ENCODE measurements at regions of chr12 and their contacts with region 1.

Region 1: GRCh38 chr12:57793920-57794319 is 11.3 kb downstream of the TSFM start:
- DNase-seq: peak; percentile 74
- H3K4me3 Mint-ChIP-seq: no peak overlapping the region
- H3K27ac Mint-ChIP-seq: no peak overlapping the region
- H3K4me1 Mint-ChIP-seq: peaks cover 9% of the 10 kb centered on the region
- H3K27me3 Mint-ChIP-seq: no peaks in the 10 kb centered on the region
- CTCF ChIP-seq: no peak

Region 2: DNA sequence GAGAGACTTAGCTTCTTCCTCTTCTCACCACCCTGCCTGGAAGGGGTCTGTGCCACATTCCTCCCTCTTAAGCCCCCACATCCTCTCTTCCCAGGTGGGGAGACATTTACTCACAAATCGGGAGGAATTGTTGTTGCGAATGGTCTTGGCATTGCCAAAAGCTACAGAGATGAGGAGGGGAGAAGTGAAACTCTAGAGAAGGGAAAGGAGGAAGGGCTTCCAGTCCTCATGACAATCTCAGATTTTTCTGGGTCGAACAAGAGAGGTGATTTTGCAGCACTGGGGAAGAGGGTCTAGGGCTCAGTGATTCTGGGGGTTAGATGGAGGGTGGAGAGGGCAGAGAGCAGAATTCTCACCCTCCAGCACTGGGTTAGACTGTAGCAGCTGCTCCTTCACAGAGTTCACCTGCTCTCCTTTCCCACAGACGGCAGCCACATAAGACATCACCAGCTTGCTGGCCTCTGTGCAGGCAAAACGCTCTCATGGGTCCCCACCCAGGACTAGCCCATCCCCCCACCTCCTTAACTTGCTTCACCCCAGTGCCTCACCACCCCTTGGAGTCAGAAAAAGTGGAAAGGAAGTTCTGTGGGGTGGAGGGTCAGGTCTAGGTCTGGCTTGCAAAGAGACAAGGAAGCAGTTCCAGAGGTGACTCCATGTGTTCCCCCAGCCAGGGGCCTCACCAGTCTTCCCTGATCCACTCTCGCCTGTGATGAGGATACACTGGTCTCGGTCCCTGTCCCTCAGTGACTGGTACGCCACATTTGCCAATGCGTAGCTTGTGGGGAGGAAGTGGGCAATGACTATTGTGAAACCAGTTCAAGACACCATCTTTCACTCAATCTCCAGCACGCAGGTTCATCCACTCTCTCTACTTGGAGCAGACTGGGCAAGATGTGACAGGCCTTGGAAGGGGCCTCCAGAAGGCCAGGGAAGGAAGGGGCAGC is 746.7 kb before region 1 on chr12:
- CTCF ChIA-PET with region 1: no interaction called
- POLR2A ChIA-PET with region 1: no interaction called
- intact Hi-C with region 1: no loop called
- DNase-seq: no peak
- H3K4me3 Mint-ChIP-seq: no peak overlapping the region
- H3K27ac Mint-ChIP-seq: no peak overlapping the region
- H3K4me1 Mint-ChIP-seq: no peaks in the 10 kb centered on the region
- H3K27me3 Mint-ChIP-seq: peaks cover 28% of the 10 kb centered on the region
- CTCF ChIP-seq: no peak

Region 3: DNA sequence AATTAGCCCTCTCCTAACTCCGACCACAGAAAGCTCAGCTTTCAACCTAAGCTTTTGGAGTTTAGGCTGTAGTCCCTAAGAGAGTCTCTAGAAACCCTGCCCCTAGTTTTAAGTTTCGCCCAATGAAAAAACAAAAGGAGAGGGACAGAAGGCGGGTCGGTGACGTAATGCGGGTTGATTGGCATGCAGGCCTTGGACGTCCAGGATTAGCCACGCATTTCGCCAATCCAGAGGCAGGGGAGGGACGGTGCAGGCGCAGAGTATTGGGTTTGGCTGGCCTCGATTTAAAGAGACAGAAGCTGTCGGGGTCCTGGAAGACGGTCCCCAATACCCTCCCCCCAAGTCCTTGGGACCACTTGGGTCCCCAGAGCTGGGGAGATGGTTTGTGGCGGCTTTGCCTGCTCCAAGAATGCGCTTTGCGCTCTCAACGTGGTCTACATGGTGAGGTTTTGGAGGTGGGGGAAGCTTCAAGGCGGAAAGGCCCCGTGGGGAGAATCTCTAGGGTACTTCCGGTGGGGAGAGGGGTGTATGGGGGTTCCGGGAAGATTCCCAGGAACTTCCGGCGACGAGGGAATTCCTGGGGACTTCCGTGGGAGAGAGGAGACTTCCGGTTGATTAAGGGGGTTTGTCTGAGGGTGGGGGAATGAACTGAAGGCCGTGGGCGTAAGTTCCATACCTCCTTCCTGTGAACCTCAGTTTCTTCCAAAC is 49.0 kb before region 1 on chr12 and contains the start of gene TSPAN31:
- CTCF ChIA-PET with region 1: no interaction called
- POLR2A ChIA-PET with region 1: interaction called, 12 read pairs
- intact Hi-C with region 1: no loop called
- DNase-seq: peak; percentile 99
- H3K4me3 Mint-ChIP-seq: peak within 1 kb of the TSS; percentile 100
- H3K27ac Mint-ChIP-seq: peak within 1 kb of the TSS; percentile 100
- H3K4me1 Mint-ChIP-seq: peaks cover 11% of the 10 kb centered on the region
- H3K27me3 Mint-ChIP-seq: peaks cover 16% of the 10 kb centered on the region
- CTCF ChIP-seq: no peak
- total RNA-seq, gene TSPAN31: 24.8 and 30.9 TPM in 2 replicates